PC-9 (cell line): ENCODE measurements at regions of chr9 and their contacts with region 1.

Region 1: GRCh38 chr9:78035383-78035993 is 3.9 kb upstream of the GNAQ start:
- DNase-seq: peak; percentile 46 to 47
- H3K4me3 ChIP-seq: no peak overlapping the region
- H3K27ac ChIP-seq: no peak overlapping the region
- H3K4me1 ChIP-seq: peaks cover 39% of the 10 kb centered on the region
- H3K27me3 ChIP-seq: no peaks in the 10 kb centered on the region
- CTCF ChIP-seq: peak; percentile 89

Region 2: GRCh38 chr9:77177161-77177893 is 858.2 kb before region 1 on chr9 and contains the start of gene VPS13A:
- CTCF ChIA-PET with region 1: no interaction called
- POLR2A ChIA-PET with region 1: no interaction called
- intact Hi-C with region 1: loop called (anchors 5 kb)
- DNase-seq: peak; percentile 84 to 97
- H3K4me3 ChIP-seq: peak within 1 kb of the TSS; percentile 76
- H3K27ac ChIP-seq: peak within 1 kb of the TSS; percentile 44
- H3K4me1 ChIP-seq: peaks cover 31% of the 10 kb centered on the region
- H3K27me3 ChIP-seq: no peaks in the 10 kb centered on the region
- CTCF ChIP-seq: no peak; the same call in 1 of the 2 replicates
- total RNA-seq, gene VPS13A: 37.4 and 53.9 TPM in 2 replicates

Region 3: DNA sequence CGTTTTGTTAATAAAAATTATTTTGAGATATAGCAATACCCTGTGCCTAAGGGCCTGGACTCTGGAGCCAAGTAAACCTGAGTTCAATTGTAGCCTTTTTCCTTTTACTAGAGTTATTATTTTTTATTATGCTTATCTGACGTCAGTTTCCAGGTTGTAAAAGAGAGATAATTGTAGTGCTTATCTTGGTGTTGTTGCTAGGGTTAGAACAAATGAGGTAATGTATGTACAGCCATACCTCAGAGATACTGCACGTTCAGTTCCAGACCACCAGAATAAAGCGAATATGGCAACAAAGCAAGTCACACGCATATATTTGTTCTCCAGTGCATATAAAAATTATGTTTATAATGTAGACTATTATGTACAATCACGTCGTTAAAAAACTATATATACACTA is 643.2 kb before region 1 on chr9:
- CTCF ChIA-PET with region 1: no interaction called
- POLR2A ChIA-PET with region 1: no interaction called
- intact Hi-C with region 1: no loop called
- DNase-seq: no peak
- H3K4me3 ChIP-seq: no peak overlapping the region
- H3K27ac ChIP-seq: no peak overlapping the region
- H3K4me1 ChIP-seq: no peaks in the 10 kb centered on the region
- H3K27me3 ChIP-seq: no peaks in the 10 kb centered on the region
- CTCF ChIP-seq: no peak

Region 4: GRCh38 chr9:77588271-77588937 is 447.1 kb before region 1 on chr9:
- CTCF ChIA-PET with region 1: interaction called, 4 read pairs
- POLR2A ChIA-PET with region 1: no interaction called
- intact Hi-C with region 1: loop called (anchors 2 kb)
- DNase-seq: peak; percentile 31 to 89
- H3K4me3 ChIP-seq: peak overlapping the region; percentile 45; the same call in 1 of the 2 replicates
- H3K27ac ChIP-seq: peak overlapping the region; percentile 96
- H3K4me1 ChIP-seq: peaks cover 50% of the 10 kb centered on the region
- H3K27me3 ChIP-seq: no peaks in the 10 kb centered on the region
- CTCF ChIP-seq: no peak

Region 5: DNA sequence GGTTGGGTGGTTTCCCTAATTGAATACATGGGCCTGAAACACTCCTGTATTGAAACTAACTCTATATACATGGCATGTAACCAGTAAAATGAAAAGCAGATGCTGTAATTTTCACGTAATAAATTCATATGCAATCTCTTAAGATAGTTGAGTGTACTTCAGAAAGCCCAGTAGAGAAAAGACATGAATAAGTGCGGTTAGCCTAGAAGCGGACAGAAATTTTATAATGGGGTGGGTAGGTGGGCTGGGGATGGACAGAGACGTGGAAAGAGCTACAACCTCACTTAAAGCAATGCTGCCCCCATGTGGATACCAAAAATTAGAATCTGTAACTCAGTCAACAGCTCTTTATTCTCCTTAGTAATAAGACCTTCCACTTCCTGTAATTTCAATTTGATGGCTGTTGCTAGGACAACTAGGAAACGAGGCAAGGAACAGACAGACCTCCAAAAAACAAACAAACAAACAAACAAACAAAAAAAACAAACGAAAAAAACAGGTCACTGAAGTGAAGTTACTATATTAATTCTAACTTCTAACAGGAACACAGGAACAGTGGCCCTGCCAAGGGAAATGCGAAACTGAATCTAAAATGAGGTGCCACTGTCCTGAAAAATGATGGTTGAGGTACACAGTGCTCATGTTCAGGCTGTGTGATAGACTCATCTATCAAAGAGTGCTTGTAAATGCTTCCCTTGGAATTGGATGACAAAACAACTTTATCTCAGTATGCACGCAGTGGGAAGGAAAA is 284.0 kb before region 1 on chr9:
- CTCF ChIA-PET with region 1: no interaction called
- POLR2A ChIA-PET with region 1: no interaction called
- intact Hi-C with region 1: loop called (anchors 2 kb)
- DNase-seq: peak; percentile 28 to 38
- H3K4me3 ChIP-seq: no peak overlapping the region
- H3K27ac ChIP-seq: no peak overlapping the region
- H3K4me1 ChIP-seq: no peaks in the 10 kb centered on the region; the same call in 1 of the 2 replicates
- H3K27me3 ChIP-seq: no peaks in the 10 kb centered on the region
- CTCF ChIP-seq: peak; percentile 77

Region 6: GRCh38 chr9:77899679-77900354 is 135.7 kb before region 1 on chr9:
- CTCF ChIA-PET with region 1: interaction called, 4 read pairs
- POLR2A ChIA-PET with region 1: no interaction called
- intact Hi-C with region 1: loop called (anchors 2 kb)
- DNase-seq: peak in 1 of 2 experiments; percentile 61
- H3K4me3 ChIP-seq: no peak overlapping the region
- H3K27ac ChIP-seq: no peak overlapping the region
- H3K4me1 ChIP-seq: peaks cover 39% of the 10 kb centered on the region
- H3K27me3 ChIP-seq: no peaks in the 10 kb centered on the region
- CTCF ChIP-seq: no peak

Region 7: DNA sequence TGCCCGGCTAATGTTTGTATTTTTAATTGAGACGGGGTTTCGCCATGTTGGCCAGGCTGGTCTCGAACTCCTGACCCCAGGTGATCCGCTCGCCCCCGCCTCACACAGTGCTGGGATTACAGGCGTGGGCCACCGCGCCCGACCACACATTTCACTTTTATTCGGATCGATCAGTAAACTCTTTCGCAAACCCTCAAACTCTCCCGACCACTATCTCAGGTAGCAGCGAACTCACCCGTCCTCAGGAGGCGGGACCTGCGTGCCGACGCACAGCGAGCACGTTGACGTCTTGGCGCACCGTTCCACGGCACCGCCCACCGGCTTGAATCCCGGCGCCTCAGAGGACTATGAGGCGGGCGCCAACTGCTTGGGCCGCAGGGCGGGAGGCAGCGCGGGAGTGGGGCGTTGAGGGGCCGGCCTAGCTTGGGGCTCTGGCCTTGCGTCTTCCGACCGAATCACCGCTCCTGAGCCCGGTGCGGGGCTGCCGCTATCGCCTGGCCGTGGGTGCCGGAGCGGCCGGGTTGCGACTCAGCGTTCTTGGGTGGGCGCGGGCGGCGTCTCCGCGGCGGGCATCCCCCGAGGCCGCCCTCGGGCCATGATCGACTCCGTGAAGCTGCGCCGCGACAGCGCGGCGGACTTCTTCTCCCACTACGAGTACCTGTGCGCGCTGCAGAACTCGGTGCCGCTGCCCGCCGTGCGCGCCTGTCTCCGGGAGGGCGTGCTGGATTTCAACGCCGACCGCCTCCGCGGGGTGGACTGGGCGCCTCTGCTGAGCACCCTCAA is 200.5 kb after region 1 on chr9 and contains the start of gene CEP78:
- CTCF ChIA-PET with region 1: interaction called, 3 read pairs
- POLR2A ChIA-PET with region 1: no interaction called
- intact Hi-C with region 1: loop called (anchors 10 kb)
- DNase-seq: peak; percentile 90 to 94
- H3K4me3 ChIP-seq: peak within 1 kb of the TSS; percentile 94
- H3K27ac ChIP-seq: peak within 1 kb of the TSS; percentile 56
- H3K4me1 ChIP-seq: peaks cover 7% of the 10 kb centered on the region
- H3K27me3 ChIP-seq: no peaks in the 10 kb centered on the region
- CTCF ChIP-seq: no peak
- total RNA-seq, gene CEP78: 37.8 and 38.3 TPM in 2 replicates